Upper lobe of right lung (tissue), 1 donor: ENCODE measurements at regions of chr19 and their contacts with region 1.

Region 1: DNA sequence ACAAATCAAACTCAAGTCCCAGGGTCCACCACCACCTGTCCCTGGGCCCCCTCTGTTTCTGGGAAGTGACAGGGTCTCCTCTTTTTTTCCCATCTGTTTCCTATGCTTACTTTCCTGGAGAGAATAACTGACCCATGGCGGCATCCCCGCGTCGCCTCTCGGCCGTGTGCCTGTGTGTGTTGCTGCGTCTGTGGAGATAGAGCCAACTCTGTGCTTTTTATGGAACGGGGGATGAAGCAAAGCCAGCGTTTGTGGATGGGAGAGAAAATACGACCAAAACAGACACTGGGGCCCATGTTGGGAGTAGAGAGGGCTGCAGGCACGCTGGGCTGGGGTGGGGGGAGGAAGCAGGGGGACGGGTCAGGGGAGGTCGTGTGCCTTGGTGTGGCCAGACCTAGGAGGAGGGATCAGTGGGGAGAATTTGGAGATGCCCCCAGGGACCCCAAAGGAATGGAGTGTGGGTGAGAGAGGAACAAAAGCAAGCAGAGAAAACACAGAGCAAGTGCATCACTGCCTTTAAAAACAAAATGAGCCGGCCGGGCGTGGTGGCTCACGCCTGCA is 16.6 kb downstream of the PLK5 start:
- DNase-seq: no peak
- ATAC-seq: no peak
- H3K4me3 ChIP-seq: no peak overlapping the region
- H3K27ac ChIP-seq: no peak overlapping the region
- H3K4me1 ChIP-seq: no peaks in the 10 kb centered on the region
- H3K27me3 ChIP-seq: peaks cover 12% of the 10 kb centered on the region
- CTCF ChIP-seq: no peak

Region 2: DNA sequence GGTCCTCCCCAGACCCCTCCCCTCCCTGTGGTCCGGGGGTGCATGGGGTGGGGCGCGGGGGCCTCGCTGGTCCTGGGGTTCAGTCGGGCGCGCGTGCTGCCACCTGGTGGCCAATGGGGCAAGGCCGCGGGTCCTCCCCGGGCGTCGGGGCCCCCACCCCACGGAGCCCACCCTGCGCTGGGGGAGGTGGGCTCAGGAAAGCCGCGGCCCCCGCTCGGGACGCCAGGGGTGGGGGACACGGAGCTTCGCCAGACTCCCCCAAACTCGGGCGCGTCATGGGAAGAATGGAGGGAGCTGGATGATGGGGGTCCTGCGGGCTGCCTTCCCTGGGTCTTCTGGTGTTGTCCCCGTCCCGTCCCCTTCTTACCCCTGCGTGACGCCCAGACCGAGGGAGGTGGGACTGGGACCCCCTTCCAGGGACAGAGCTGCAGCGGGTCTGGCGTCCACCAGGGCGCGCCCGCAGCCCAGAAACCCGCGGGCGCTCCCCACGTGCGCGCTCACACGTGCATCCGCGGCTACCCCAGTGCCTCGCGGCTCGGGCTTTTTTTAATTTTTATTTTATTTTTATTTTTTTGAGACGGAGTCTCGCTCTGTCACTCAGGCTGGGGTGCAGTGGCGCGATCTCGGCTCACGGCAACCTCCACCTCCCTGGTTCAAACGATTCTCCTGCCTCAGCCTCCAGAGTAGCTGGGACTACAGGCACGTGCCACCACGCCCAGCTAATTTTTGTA is 131.8 kb after region 1 on chr19:
- intact Hi-C with region 1: loop called (anchors 10 kb)
- DNase-seq: peak; percentile 80
- ATAC-seq: peak; percentile 60
- H3K4me3 ChIP-seq: no peak overlapping the region
- H3K27ac ChIP-seq: no peak overlapping the region
- H3K4me1 ChIP-seq: peaks cover 6% of the 10 kb centered on the region
- H3K27me3 ChIP-seq: peaks cover 88% of the 10 kb centered on the region
- CTCF ChIP-seq: peak; percentile 75

Region 3: GRCh38 chr19:1767464-1767933 is 227.1 kb after region 1 on chr19:
- intact Hi-C with region 1: loop called (anchors 10 kb)
- DNase-seq: no peak
- ATAC-seq: peak; percentile 81
- H3K4me3 ChIP-seq: no peak overlapping the region
- H3K27ac ChIP-seq: no peak overlapping the region
- H3K4me1 ChIP-seq: peaks cover 2% of the 10 kb centered on the region
- H3K27me3 ChIP-seq: peaks cover 82% of the 10 kb centered on the region
- CTCF ChIP-seq: peak; percentile 91